ENCODE measurements at regions of chr7 and their contacts with region 1.

Region 1: DNA sequence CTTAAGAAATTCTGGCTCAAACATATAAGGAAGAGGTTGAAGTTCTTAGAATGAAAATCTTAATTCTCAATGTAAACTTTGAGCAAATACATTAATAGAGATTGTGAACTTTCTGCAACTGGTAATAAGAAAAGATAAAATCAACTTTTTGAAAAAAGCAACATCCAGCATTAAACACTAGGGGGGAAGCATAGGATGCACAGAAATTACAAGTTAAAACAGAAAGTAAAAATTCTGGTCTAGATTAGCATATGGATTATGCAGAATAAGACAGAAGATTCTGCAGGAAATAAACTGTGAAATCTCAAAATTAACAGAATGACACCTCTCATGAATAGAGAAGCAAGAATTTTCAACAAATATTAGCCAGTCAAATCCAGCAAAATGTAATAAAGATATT is 38.0 kb upstream of the CAV2 start:
- DNase-seq: no peak
- ATAC-seq: no peak
- H3K4me3 ChIP-seq: peak overlapping the region; percentile 15 to 30; a peak in 2 of 4 replicates
- H3K27ac ChIP-seq: peak overlapping the region; percentile 88; the same call in 1 of the 2 replicates
- H3K4me1 ChIP-seq: peaks cover 44 to 82% of the 10 kb centered on the region in 2 experiments
- H3K27me3 ChIP-seq: no peaks in the 10 kb centered on the region
- CTCF ChIP-seq: peak in 2 of 3 experiments; percentile 13 to 41; a peak in 3 of 6 replicates
- POLR2A ChIP-seq: no peak
- RAD21 ChIP-seq: no peak; the same call in 1 of the 2 replicates

Region 2: GRCh38 chr7:116511552-116512519 is 50.3 kb after region 1 on chr7:
- CTCF ChIA-PET with region 1: no interaction called
- POLR2A ChIA-PET with region 1: no interaction called
- RAD21 ChIA-PET with region 1: no interaction called
- intact Hi-C with region 1: loop called (anchors 5 kb)
- DNase-seq: peak; percentile 85
- ATAC-seq: peak; percentile 71
- H3K4me3 ChIP-seq: peak overlapping the region; percentile 41 to 48
- H3K27ac ChIP-seq: peak overlapping the region; percentile 96
- H3K4me1 ChIP-seq: peaks cover 51 to 78% of the 10 kb centered on the region in 2 experiments
- H3K27me3 ChIP-seq: no peaks in the 10 kb centered on the region
- CTCF ChIP-seq: no peak
- POLR2A ChIP-seq: no peak
- RAD21 ChIP-seq: no peak